Cardiac septum (tissue), 1 donor: ENCODE measurements at regions of chr3 and their contacts with region 1.

Region 1: DNA sequence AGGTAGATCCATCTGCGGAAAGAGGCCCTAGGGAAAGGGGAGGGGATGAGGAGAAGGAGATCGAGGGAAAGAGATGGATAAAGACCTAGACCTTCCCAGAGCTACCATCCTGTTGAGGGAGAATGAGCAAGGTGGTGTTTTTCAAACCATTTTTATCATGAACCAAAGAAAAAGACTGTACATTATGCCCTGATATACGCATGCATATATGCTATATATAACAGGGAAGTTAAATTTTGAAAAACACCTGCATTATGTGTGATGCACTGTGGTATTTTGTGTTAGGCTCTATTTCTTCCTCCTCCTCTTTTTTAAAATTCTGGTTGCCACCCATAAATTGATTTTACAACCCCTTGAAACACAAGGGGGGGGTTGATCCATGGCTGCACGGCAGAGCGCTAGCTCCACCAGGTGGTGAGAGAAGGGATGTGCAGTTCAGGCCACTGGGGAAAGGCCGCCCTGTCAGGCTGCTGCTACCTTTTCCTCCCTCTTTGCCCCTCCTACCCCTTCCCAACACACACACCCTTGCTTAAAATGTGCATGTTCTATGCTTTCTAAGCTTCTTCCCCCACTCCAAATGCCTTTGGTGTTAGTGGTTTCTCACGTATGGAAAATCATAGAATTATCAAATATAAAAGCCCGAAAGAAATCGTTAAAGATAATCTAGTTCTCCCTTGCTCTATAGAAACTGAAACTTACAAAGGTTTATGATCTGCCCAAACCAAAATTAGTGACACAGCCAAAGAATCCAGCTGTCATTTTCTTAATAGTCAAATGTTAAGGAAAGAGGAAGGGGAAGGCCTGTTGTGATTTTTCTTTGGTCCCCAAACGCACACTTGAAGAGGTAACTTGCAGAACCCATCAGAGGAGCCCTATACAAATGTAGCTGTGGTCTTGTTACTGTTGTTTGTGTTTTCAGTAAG is 262.0 kb upstream of the UMPS start:
- DNase-seq: no peak

Region 2: GRCh38 chr3:124078953-124079911 is 389.0 kb before region 1 on chr3:
- intact Hi-C with region 1: loop called (anchors 5 kb)
- DNase-seq: no peak

Region 3: DNA sequence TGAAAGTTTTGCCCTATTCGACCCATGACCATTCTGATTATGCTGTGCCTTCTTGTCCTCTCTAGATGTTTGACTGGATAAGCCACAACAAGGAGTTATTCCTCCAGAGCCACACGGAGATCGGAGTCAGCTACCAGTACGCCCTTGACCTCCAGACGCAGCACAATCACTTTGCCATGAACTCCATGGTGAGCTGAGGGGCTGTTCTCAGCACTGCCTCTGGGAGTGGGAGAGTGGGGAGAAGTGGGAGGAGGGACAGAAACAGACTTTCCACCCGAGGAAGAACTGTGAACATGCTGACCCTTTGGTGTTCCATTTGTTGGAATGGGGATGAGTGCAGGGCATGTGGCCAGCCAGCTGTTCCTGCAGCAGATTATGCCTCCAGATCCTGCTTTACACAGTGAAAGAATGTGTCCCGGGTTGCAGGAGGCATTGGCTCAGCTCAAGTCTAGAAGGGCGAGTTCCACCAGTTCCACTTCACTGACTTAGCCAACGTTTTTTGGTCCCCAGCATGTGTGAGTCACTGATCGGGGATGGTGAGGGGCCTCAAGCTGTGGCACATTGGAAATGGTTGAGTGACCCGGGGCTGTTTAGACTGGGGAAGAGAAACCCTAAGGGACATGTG is 169.4 kb before region 1 on chr3:
- intact Hi-C with region 1: no loop called
- DNase-seq: no peak

Region 4: DNA sequence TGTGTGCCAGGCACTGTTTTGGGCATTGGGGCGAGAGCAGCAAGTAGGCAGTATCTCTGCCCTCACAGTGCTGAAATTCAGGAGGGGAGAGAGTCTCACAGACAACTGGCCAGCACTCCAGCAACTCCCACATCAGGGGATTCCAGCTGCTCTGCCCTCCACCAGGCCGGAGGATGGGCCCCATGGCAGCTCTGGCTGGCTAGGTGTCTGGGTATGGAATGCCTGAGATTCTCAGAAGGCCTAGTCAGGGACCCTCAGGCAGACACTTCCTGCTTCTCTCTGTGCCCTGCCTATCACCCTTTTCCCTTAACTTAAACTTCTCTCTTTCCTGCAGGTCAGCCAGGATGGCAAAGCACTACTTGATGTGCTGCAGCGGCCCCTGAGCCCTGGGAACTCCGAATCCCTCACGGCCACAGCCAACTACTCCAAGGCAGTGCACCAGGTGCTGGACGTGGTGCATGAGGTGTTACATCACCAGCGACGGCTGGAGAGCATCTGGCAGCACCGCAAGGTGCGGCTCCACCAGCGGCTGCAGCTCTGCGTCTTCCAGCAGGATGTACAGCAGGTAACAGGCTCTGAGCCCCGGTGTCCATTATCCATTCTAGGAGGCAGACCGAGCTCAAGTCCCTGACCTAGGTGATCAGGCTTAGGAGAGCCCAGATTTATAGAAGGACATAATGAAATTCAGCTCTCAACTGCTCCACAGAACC is 134.2 kb before region 1 on chr3:
- intact Hi-C with region 1: no loop called
- DNase-seq: no peak

Region 5: GRCh38 chr3:124351430-124352148 is 116.7 kb before region 1 on chr3:
- intact Hi-C with region 1: loop called (anchors 1 kb)
- DNase-seq: no peak